CD4-positive, alpha-beta memory T cell (primary cell): ENCODE measurements at regions of chr2 and their contacts with region 1.

Region 1: GRCh38 chr2:74267068-74267467 is 68.7 kb downstream of the MTHFD2 start:
- DNase-seq: peak; percentile 66 to 73 (median 70)
- H3K4me3 ChIP-seq: no peak overlapping the region
- H3K4me3 Mint-ChIP-seq: peak overlapping the region; percentile 11 to 77 (median 65)
- H3K27ac ChIP-seq: no peak overlapping the region
- H3K27ac Mint-ChIP-seq: peak overlapping the region in 6 of 7 donors; percentile 14 to 81 (median 70)
- H3K4me1 ChIP-seq: peaks cover 20% of the 10 kb centered on the region
- H3K4me1 Mint-ChIP-seq: peaks cover 14 to 23% (median 18%) of the 10 kb centered on the region in 4 donors
- H3K27me3 ChIP-seq: no peaks in the 10 kb centered on the region
- H3K27me3 Mint-ChIP-seq: no peaks in the 10 kb centered on the region

Region 2: DNA sequence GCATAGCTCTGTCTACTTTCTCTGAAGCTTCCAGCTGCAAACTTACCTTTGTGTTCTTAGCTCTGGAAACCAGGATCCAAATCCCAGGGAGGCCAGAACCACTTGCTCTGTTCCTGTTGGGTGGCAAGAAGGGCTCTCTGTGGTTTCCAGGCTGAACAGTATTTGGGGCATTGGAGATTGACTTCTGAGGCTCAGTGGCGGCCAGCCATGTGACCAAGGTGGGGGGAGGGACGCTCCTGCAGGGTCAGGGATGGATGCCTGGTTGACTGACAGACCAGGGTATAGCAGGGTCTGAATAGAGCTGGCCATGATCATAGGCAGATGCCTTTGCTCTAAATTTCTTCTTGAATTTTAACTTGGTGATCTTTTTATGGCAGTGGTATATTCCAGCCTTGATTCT is 61.0 kb after region 1 on chr2:
- CTCF ChIA-PET with region 1: interaction called, 153 read pairs
- POLR2A ChIA-PET with region 1: no interaction called
- intact Hi-C with region 1: no loop called
- DNase-seq: no peak
- H3K4me3 ChIP-seq: no peak overlapping the region
- H3K4me3 Mint-ChIP-seq: no peak overlapping the region
- H3K27ac ChIP-seq: no peak overlapping the region
- H3K27ac Mint-ChIP-seq: peak overlapping the region in 2 of 7 donors; percentile 11 to 29
- H3K4me1 ChIP-seq: peaks cover 3% of the 10 kb centered on the region
- H3K4me1 Mint-ChIP-seq: no peaks in the 10 kb centered on the region
- H3K27me3 ChIP-seq: no peaks in the 10 kb centered on the region
- H3K27me3 Mint-ChIP-seq: no peaks in the 10 kb centered on the region